HepG2 (cell line): ENCODE measurements at regions of chr13 and their contacts with region 1.

Region 1: DNA sequence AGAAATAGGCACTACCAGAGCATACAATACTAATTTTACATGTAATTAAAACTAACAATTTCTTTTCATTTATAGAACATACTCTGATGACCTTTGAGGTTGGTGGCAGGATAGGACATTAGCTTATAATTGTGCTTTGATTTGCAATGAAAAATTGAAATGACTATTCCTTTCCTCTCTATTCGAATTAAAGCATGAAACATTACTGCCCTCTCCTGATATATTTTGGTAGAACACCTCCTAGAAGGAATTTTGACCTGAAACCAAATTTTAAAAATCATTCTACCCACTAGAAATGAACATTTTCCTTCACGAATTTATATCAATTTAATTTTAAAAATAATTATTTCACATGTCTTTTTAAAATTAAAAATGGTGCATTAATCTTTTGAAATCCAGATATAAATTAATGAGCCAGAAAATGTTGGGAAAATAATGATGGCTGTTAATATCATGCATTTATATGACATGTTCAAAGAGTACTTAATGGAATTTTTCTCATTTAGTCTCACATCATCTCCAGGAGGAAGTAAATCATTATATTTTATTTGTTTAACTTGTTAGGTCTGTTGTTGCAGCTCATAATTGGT is 556.3 kb upstream of the ARGLU1 start:
- DNase-seq: peak; percentile 18
- ATAC-seq: no peak
- H3K4me3 ChIP-seq: no peak overlapping the region
- H3K27ac ChIP-seq: no peak overlapping the region
- H3K4me1 ChIP-seq: peaks cover 34% of the 10 kb centered on the region
- H3K27me3 ChIP-seq: no peaks in the 10 kb centered on the region; a peak in 1 of 5 replicates
- CTCF ChIP-seq: peak; percentile 48
- EP300 ChIP-seq: no peak
- POLR2A ChIP-seq: no peak
- RAD21 ChIP-seq: no peak

Region 2: GRCh38 chr13:106551350-106551749 is 572.9 kb before region 1 on chr13:
- CTCF ChIA-PET with region 1: no interaction called
- POLR2A ChIA-PET with region 1: no interaction called
- in situ Hi-C with region 1: no loop called
- intact Hi-C with region 1: loop called (anchors 5 kb)
- DNase-seq: no peak
- ATAC-seq: no peak
- H3K4me3 ChIP-seq: no peak overlapping the region
- H3K27ac ChIP-seq: no peak overlapping the region
- H3K4me1 ChIP-seq: no peaks in the 10 kb centered on the region
- H3K27me3 ChIP-seq: no peaks in the 10 kb centered on the region
- CTCF ChIP-seq: no peak
- EP300 ChIP-seq: no peak
- POLR2A ChIP-seq: no peak
- RAD21 ChIP-seq: no peak

Region 3: GRCh38 chr13:106619688-106620555 is 504.3 kb before region 1 on chr13:
- CTCF ChIA-PET with region 1: no interaction called
- POLR2A ChIA-PET with region 1: no interaction called
- in situ Hi-C with region 1: no loop called
- intact Hi-C with region 1: loop called (anchors 5 kb)
- DNase-seq: peak; percentile 40
- ATAC-seq: peak; percentile 99
- H3K4me3 ChIP-seq: no peak overlapping the region
- H3K27ac ChIP-seq: no peak overlapping the region
- H3K4me1 ChIP-seq: no peaks in the 10 kb centered on the region
- H3K27me3 ChIP-seq: peaks cover 2 to 29% of the 10 kb centered on the region in 2 experiments; a peak in 3 of 5 replicates
- CTCF ChIP-seq: peak; percentile 84
- EP300 ChIP-seq: no peak
- POLR2A ChIP-seq: no peak
- RAD21 ChIP-seq: no peak

Region 4: DNA sequence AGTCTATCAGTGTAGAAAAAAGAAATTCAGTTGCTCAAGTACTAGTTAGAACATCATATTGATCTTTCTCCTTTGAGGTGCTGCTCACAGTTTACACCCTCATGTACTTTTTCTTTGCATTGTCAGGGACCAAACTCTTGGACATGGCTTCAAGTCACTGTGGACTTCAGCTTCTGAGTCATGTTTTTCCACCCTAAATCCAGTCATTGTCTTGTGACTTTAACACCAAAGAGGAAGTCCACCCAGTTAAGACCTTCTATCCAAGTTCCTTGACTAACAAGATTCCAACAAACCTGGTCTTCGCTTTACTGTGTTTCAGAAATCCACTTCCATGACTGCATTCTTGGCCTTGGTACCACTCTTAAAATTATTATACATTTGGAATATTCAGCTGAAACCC is 349.6 kb before region 1 on chr13:
- CTCF ChIA-PET with region 1: no interaction called
- POLR2A ChIA-PET with region 1: no interaction called
- in situ Hi-C with region 1: no loop called
- intact Hi-C with region 1: no loop called
- DNase-seq: no peak
- ATAC-seq: no peak
- H3K4me3 ChIP-seq: no peak overlapping the region
- H3K27ac ChIP-seq: no peak overlapping the region
- H3K4me1 ChIP-seq: no peaks in the 10 kb centered on the region
- H3K27me3 ChIP-seq: no peaks in the 10 kb centered on the region
- CTCF ChIP-seq: no peak
- EP300 ChIP-seq: no peak
- POLR2A ChIP-seq: no peak
- RAD21 ChIP-seq: no peak

Region 5: DNA sequence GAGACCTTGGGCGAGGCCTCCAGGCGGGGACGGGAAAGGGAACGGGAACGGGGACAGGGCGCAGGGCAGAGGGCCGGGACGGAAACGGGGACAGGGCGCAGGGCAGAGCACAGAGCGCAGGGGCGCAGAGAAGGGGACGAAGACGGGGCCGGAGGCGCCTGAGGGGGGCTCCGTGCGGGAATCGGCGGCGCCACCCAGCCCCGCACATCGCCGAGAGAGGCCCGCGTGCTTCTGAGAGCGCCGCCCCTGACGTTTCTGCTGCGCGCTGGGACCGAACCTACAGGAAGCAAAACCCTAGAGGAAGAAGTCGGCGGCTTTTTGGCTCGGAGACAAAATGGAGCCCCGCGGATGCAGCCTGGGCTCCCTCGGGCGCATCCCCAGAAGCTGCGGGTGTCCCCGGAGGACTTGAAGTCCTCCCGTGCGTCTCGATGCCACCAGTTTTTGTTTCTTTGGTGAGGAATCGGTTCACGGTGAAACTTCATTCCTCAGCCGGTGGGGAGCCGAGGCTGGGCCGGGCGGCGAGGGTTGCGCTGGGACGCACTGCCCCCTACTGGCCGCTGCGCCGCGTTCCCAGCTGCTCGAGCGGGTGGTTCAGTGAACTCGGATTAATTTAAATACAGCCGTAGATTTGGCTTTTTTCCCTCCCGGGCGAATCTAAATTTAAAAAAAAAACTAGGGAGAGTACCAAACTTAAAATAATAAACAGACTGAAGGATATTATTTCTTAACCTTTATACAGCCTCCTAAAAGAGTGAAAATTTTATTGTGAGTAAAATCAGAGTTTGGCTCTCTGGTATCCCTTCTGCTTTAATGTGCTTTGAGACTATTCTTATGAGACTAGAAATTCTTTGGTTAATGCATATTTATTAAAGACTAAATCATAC is 206.3 kb before region 1 on chr13:
- CTCF ChIA-PET with region 1: no interaction called
- POLR2A ChIA-PET with region 1: no interaction called
- in situ Hi-C with region 1: no loop called
- intact Hi-C with region 1: loop called (anchors 1 kb)
- DNase-seq: no peak
- ATAC-seq: peak; percentile 99
- H3K4me3 ChIP-seq: peak overlapping the region; percentile 53 to 75 (median 62); a peak in 5 of 6 replicates
- H3K27ac ChIP-seq: no peak overlapping the region
- H3K4me1 ChIP-seq: peaks cover 6% of the 10 kb centered on the region; the same call in 1 of the 2 replicates
- H3K27me3 ChIP-seq: peaks cover 0 to 6% of the 10 kb centered on the region in 2 experiments; a peak in 2 of 5 replicates
- CTCF ChIP-seq: peak; percentile 88
- EP300 ChIP-seq: no peak
- POLR2A ChIP-seq: no peak
- RAD21 ChIP-seq: peak; percentile 61